ENCODE measurements at regions of chr5 and their contacts with region 1.

Region 1: GRCh38 chr5:108681079-108681921 is 66.4 kb upstream of the FER start:
- DNase-seq: peak; percentile 56
- H3K4me3 ChIP-seq: no peak overlapping the region
- H3K27ac ChIP-seq: no peak overlapping the region
- H3K4me1 ChIP-seq: no peaks in the 10 kb centered on the region
- H3K27me3 ChIP-seq: no peaks in the 10 kb centered on the region
- CTCF ChIP-seq: peak; percentile 72 to 87

Region 2: DNA sequence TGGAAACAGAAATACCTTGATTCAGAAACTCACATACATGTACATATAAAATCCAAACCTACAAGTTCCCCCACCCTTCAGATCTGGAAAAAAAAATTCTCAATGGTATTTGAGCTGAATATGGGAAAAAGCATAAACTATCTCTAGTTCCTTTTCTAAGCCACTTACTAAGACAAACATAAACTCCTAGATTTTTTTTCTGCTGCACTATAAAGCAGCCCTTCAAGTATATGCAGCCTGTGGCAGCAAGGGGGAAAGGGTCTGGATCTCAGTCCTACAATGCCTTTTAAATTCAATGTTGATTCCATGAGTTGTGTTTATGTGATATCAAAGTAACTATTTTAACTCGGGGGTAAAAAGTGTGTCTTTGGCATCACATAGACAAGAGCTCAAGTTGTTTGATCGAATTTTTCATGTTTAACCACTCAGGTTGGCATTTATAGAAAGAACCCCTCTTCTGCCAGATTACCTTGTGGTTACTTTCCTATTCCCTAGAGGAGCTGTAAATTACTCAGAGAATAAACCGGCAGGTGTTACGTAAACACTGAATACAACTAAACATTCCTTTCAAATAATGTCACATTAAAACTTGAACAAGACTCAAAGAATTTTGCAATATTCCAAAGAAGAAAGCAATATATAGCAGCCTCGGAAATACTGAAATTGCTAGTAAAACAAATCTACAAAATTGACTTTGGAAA is 25.4 kb before region 1 on chr5:
- CTCF ChIA-PET with region 1: no interaction called
- dilution Hi-C with region 1: no loop called
- in situ Hi-C with region 1: no loop called
- intact Hi-C with region 1: no loop called
- DNase-seq: peak; percentile 75
- H3K4me3 ChIP-seq: no peak overlapping the region
- H3K27ac ChIP-seq: no peak overlapping the region
- H3K4me1 ChIP-seq: peaks cover 15% of the 10 kb centered on the region
- H3K27me3 ChIP-seq: no peaks in the 10 kb centered on the region
- CTCF ChIP-seq: no peak

Region 3: DNA sequence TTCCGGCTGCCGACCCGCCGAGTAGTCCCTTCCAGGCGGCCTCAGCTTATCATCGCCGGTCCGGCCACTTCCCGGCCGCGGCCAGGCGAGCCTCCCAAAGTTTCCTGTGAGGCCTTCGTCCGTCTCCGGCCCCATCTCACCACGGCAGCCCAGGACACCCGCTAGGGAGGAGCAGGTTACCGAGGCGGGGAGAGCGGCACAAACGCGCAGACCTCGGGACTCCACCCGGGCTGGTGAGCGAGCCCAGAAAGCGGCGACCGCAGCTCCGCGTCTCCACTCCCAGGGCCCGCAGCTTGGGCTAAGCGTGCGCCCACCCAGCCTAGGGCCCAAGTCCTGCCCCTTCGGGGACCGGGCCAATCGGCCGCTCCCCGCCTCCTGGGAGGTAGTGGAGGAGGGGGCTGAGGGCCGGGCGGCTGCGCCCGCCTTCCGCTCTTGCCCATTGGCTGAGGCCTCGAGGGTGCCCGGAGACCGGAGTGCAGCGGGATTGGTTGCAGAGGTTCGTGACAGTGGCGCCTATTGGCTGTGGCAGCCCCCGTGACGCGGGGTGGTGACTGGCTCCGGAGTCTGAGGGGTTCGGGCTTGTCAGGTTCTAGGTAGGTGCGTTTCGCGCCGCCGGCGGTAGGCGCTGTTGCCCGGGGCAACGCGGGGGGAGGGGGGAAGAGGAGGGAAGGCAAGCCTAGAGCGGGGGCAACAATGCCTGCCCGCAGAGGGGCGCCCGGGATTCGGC is 67.3 kb after region 1 on chr5:
- CTCF ChIA-PET with region 1: no interaction called
- dilution Hi-C with region 1: no loop called
- in situ Hi-C with region 1: no loop called
- intact Hi-C with region 1: loop called (anchors 1 kb)
- DNase-seq: peak; percentile 100
- H3K4me3 ChIP-seq: peak overlapping the region; percentile 93 to 97 (median 97)
- H3K27ac ChIP-seq: peak overlapping the region; percentile 100
- H3K4me1 ChIP-seq: peaks cover 12% of the 10 kb centered on the region
- H3K27me3 ChIP-seq: no peaks in the 10 kb centered on the region
- CTCF ChIP-seq: peak in 1 of 2 donors; percentile 13

Region 4: GRCh38 chr5:108876451-108876850 is 195.2 kb after region 1 on chr5:
- CTCF ChIA-PET with region 1: no interaction called
- dilution Hi-C with region 1: no loop called
- in situ Hi-C with region 1: no loop called
- intact Hi-C with region 1: loop called (anchors 10 kb)
- DNase-seq: no peak
- H3K4me3 ChIP-seq: no peak overlapping the region
- H3K27ac ChIP-seq: no peak overlapping the region
- H3K4me1 ChIP-seq: peaks cover 17% of the 10 kb centered on the region
- H3K27me3 ChIP-seq: no peaks in the 10 kb centered on the region
- CTCF ChIP-seq: no peak

Region 5: DNA sequence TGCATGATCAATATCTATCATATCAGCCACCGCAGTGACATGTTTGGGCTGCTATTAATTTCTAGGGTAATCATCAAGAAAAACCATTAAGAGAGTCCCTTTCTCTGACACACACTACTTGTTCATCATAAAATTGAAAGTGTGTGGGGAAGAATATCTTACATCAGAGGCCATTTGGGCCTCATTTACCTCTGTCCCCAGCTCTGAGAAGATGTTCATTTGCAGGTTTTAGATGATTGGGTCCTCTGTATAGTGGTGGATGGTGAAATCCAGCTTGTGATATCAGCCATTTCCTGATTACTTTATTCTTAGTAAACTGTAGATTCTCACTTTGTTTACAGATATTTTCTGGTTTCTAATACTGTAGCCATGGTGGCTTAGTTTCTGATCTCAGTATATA is 758.3 kb after region 1 on chr5:
- CTCF ChIA-PET with region 1: no interaction called
- dilution Hi-C with region 1: no loop called
- in situ Hi-C with region 1: no loop called
- intact Hi-C with region 1: loop called (anchors 10 kb)
- DNase-seq: no peak
- H3K4me3 ChIP-seq: no peak overlapping the region
- H3K27ac ChIP-seq: no peak overlapping the region
- H3K4me1 ChIP-seq: no peaks in the 10 kb centered on the region
- H3K27me3 ChIP-seq: no peaks in the 10 kb centered on the region
- CTCF ChIP-seq: no peak

Region 6: GRCh38 chr5:109479260-109479860 is 798.1 kb after region 1 on chr5:
- CTCF ChIA-PET with region 1: no interaction called
- dilution Hi-C with region 1: no loop called
- in situ Hi-C with region 1: no loop called
- intact Hi-C with region 1: loop called (anchors 10 kb)
- DNase-seq: no peak
- H3K4me3 ChIP-seq: no peak overlapping the region
- H3K27ac ChIP-seq: no peak overlapping the region
- H3K4me1 ChIP-seq: no peaks in the 10 kb centered on the region
- H3K27me3 ChIP-seq: no peaks in the 10 kb centered on the region
- CTCF ChIP-seq: peak; percentile 57 to 59

Measured in mammary epithelial cell (primary cell).